Heart right ventricle (tissue), 16 donors: ENCODE measurements at regions of chr7 and their contacts with region 1.

Region 1: GRCh38 chr7:28853834-28854749 is 104.0 kb downstream of the TRIL start:
- DNase-seq: peak; percentile 73 to 85
- ATAC-seq: peak; percentile 96 to 99 (median 99)
- H3K4me3 ChIP-seq: peak overlapping the region; percentile 43 to 69 (median 62)
- H3K27ac ChIP-seq: peak overlapping the region in 2 of 10 donors; percentile 6 to 60
- H3K4me1 ChIP-seq: peaks cover 0 to 16% (median 5%) of the 10 kb centered on the region in 9 donors
- H3K27me3 ChIP-seq: peaks cover 0 to 67% (median 14%) of the 10 kb centered on the region in 7 donors
- CTCF ChIP-seq: peak; percentile 61 to 96 (median 89)

Region 2: GRCh38 chr7:28298870-28299518 is 555.1 kb before region 1 on chr7:
- intact Hi-C with region 1: loop called in 7 of 10 experiments (anchors 5 to 10 kb)
- DNase-seq: peak in 1 of 2 donors; percentile 47
- ATAC-seq: peak; percentile 38 to 83 (median 76)
- H3K4me3 ChIP-seq: no peak overlapping the region
- H3K27ac ChIP-seq: peak overlapping the region in 3 of 10 donors; percentile 10 to 42 (median 14)
- H3K4me1 ChIP-seq: peaks cover 0 to 13% (median 0%) of the 10 kb centered on the region in 9 donors
- H3K27me3 ChIP-seq: peaks cover 0 to 8% (median 0%) of the 10 kb centered on the region in 7 donors
- CTCF ChIP-seq: peak; percentile 19 to 63 (median 48)

Region 3: GRCh38 chr7:28389504-28390395 is 464.3 kb before region 1 on chr7:
- intact Hi-C with region 1: loop called (anchors 1 to 5 kb)
- DNase-seq: peak in 1 of 2 donors; percentile 14
- ATAC-seq: peak in 6 of 8 donors; percentile 41 to 64 (median 48)
- H3K4me3 ChIP-seq: peak overlapping the region in 8 of 10 donors; percentile 10 to 48 (median 42)
- H3K27ac ChIP-seq: peak overlapping the region in 5 of 10 donors; percentile 8 to 42 (median 17)
- H3K4me1 ChIP-seq: peaks cover 0 to 6% (median 0%) of the 10 kb centered on the region in 9 donors
- H3K27me3 ChIP-seq: peaks cover 0 to 15% (median 0%) of the 10 kb centered on the region in 7 donors
- CTCF ChIP-seq: peak; percentile 75 to 91 (median 82)

Region 4: DNA sequence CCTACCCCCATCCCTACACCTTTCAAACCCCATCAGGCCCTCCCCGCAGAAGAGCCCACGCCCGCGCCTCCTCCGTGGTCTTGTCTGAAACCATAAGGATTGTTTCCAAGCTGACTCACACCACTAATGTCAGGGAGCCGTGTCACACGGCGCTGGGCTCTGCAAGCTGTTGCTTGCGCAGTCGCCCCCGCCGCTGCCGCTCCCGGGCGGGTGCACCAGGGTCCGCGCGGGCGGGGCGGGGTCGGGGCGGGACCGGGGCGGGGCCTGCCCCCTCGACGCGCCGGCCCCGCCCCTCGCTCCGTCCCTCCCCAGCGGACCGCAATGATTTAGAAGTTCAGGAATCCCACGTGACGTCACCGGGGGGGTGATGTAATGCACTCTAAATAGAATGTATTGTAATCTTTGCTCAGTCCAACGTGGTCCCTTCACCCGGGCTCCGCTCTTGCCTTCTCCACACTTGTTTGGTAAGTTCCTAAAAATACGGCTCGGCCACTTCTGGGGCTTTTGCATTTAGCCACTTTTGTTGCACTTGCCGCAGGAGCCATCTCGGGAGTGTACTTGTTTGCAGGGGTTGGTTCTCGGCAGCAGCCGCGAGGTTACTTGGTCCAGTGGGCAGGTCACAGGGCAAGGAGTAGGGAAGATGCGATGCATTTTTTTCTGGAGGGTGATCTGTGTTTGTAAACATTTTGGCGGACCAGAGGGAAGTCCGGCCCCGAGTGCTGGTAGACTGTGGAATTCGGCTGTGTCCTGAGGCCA is 445.0 kb before region 1 on chr7:
- intact Hi-C with region 1: loop called in 1 of 10 experiments (anchors 5 kb)
- DNase-seq: peak; percentile 91 to 98
- ATAC-seq: peak; percentile 84 to 93 (median 86)
- H3K4me3 ChIP-seq: peak overlapping the region; percentile 46 to 94 (median 78)
- H3K27ac ChIP-seq: peak overlapping the region; percentile 79 to 99 (median 88)
- H3K4me1 ChIP-seq: peaks cover 0 to 63% (median 38%) of the 10 kb centered on the region in 9 donors
- H3K27me3 ChIP-seq: peaks cover 0 to 60% (median 0%) of the 10 kb centered on the region in 7 donors
- CTCF ChIP-seq: no peak

Region 5: GRCh38 chr7:28615091-28615490 is 239.0 kb before region 1 on chr7:
- intact Hi-C with region 1: loop called in 3 of 10 experiments (anchors 5 to 10 kb)
- DNase-seq: no peak
- ATAC-seq: peak in 3 of 8 donors; percentile 32 to 46 (median 45)
- H3K4me3 ChIP-seq: no peak overlapping the region
- H3K27ac ChIP-seq: no peak overlapping the region
- H3K4me1 ChIP-seq: peaks cover 0 to 29% (median 8%) of the 10 kb centered on the region in 9 donors
- H3K27me3 ChIP-seq: no peaks in the 10 kb centered on the region
- CTCF ChIP-seq: peak in 7 of 9 donors; percentile 18 to 46 (median 28)

Region 6: GRCh38 chr7:28626624-28627262 is 227.3 kb before region 1 on chr7:
- intact Hi-C with region 1: loop called in 7 of 10 experiments (anchors 1 to 10 kb)
- DNase-seq: no peak
- ATAC-seq: peak in 1 of 8 donors; percentile 46
- H3K4me3 ChIP-seq: no peak overlapping the region
- H3K27ac ChIP-seq: peak overlapping the region in 5 of 10 donors; percentile 0 to 63 (median 1)
- H3K4me1 ChIP-seq: peaks cover 0 to 84% (median 42%) of the 10 kb centered on the region in 9 donors
- H3K27me3 ChIP-seq: no peaks in the 10 kb centered on the region
- CTCF ChIP-seq: peak; percentile 28 to 79 (median 71)

Region 7: GRCh38 chr7:28685644-28686417 is 168.3 kb before region 1 on chr7:
- intact Hi-C with region 1: loop called in 2 of 10 experiments (anchors 5 to 10 kb)
- DNase-seq: peak; percentile 78 to 99
- ATAC-seq: peak; percentile 92 to 96 (median 95)
- H3K4me3 ChIP-seq: peak overlapping the region; percentile 40 to 69 (median 56)
- H3K27ac ChIP-seq: peak overlapping the region; percentile 59 to 96 (median 87)
- H3K4me1 ChIP-seq: peaks cover 3 to 69% (median 38%) of the 10 kb centered on the region in 9 donors
- H3K27me3 ChIP-seq: no peaks in the 10 kb centered on the region
- CTCF ChIP-seq: no peak